CD4-positive, alpha-beta T cell (primary cell): ENCODE measurements at regions of chr1 and their contacts with region 1.

Region 1: GRCh38 chr1:36369061-36369861 is 16.5 kb downstream of the STK40 start:
- DNase-seq: peak; percentile 76 to 91 (median 84)
- ATAC-seq: peak; percentile 54
- H3K4me3 ChIP-seq: no peak overlapping the region
- H3K4me3 Mint-ChIP-seq: peak overlapping the region; percentile 14
- H3K27ac ChIP-seq: peak overlapping the region; percentile 3 to 54
- H3K27ac Mint-ChIP-seq: peak overlapping the region; percentile 88
- H3K4me1 ChIP-seq: peaks cover 79% of the 10 kb centered on the region
- H3K4me1 Mint-ChIP-seq: peaks cover 78% of the 10 kb centered on the region
- H3K27me3 ChIP-seq: no peaks in the 10 kb centered on the region
- H3K27me3 Mint-ChIP-seq: no peaks in the 10 kb centered on the region
- CTCF ChIP-seq: peak; percentile 91

Region 2: DNA sequence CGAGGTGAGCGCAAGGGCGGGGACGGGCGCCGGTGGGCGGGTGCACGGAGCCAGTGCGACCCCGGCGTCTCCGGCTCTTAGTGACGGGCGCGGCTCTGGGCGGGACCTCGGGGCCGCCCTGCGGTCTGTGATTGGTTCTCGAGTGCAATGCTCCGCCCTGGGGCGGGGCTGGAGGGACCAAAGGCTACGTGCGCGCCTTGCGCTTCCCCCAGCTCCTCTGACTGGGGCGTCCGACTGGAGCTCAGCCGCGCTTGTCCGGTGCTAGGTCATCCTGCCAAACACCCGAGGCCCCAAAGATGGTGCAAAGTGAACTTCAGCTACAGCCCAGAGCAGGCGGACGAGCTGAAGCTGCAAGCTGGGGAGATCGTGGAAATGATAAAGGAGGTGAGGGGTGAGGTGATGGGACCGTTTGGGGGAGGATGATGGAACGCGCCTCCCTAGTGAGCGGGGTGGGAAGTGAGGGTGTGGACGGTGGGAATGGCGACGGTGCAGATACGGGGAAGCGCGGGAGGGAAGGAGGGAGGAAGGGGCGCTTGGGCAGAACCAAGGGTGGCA is 62.3 kb before region 1 on chr1:
- CTCF ChIA-PET with region 1: interaction called, 6 read pairs
- POLR2A ChIA-PET with region 1: interaction called, 12 read pairs
- intact Hi-C with region 1: loop called (anchors 2 to 5 kb)
- DNase-seq: peak; percentile 85 to 96 (median 90)
- ATAC-seq: peak; percentile 98
- H3K4me3 ChIP-seq: peak overlapping the region; percentile 64
- H3K4me3 Mint-ChIP-seq: peak overlapping the region; percentile 94
- H3K27ac ChIP-seq: peak overlapping the region in 1 of 2 donors; percentile 34
- H3K27ac Mint-ChIP-seq: peak overlapping the region; percentile 78
- H3K4me1 ChIP-seq: peaks cover 24% of the 10 kb centered on the region
- H3K4me1 Mint-ChIP-seq: peaks cover 16% of the 10 kb centered on the region
- H3K27me3 ChIP-seq: no peaks in the 10 kb centered on the region
- H3K27me3 Mint-ChIP-seq: no peaks in the 10 kb centered on the region
- CTCF ChIP-seq: no peak

Region 3: DNA sequence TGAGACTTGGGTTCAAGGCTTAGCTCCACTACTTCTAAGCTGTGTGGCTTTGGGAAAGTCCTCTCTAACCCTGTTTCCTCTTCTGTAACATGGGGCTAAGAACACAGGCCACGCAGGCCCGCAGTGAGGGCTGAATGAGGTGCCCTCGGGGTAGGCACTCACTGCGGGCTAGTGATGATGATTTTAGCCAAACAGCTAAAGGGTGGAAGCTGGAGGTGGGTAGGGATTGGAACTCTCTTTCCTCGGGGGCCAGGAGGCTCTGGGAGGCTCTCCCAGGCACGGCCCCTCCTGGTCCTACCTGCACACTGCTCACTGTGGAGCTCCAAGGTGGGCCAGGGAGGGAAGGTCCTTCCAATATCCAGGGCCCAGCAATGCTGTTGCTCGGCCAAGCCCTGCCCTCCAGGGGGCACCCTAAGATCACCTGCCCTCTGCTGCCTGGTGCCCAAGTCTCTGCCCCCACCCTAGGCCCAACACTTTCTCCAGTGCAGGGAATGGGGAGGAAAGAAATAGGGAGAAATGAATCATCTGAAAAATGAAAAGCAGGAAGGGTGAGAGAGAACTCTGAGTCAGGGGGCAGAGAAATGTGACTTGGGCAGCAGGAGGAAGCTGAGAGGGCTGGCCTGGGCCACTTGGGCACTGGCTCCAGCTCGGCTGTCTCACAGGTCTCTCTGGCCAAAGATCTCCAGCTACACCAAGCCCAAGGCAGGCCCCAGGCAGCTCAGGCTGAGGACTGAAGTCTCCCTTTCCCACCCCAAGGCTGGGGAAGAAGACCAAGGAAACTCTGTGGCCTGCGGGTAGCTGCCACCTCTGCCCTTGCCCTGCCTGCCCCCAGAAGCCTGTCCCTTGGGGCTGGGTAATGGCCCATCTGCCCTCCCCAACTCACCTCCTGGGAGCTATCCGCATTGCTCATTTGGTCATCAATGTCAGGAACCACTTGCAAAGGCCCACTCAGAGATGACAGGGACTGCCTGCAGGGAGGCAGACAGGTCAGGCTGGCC is 26.5 kb before region 1 on chr1:
- CTCF ChIA-PET with region 1: interaction called, 43 read pairs
- POLR2A ChIA-PET with region 1: interaction called, 28 read pairs
- intact Hi-C with region 1: loop called (anchors 1 kb)
- DNase-seq: peak; percentile 44 to 83 (median 63)
- ATAC-seq: peak; percentile 92
- H3K4me3 ChIP-seq: no peak overlapping the region
- H3K4me3 Mint-ChIP-seq: no peak overlapping the region
- H3K27ac ChIP-seq: no peak overlapping the region
- H3K27ac Mint-ChIP-seq: peak overlapping the region; percentile 58
- H3K4me1 ChIP-seq: peaks cover 26% of the 10 kb centered on the region
- H3K4me1 Mint-ChIP-seq: peaks cover 19% of the 10 kb centered on the region
- H3K27me3 ChIP-seq: no peaks in the 10 kb centered on the region
- H3K27me3 Mint-ChIP-seq: no peaks in the 10 kb centered on the region
- CTCF ChIP-seq: peak; percentile 79

Region 4: DNA sequence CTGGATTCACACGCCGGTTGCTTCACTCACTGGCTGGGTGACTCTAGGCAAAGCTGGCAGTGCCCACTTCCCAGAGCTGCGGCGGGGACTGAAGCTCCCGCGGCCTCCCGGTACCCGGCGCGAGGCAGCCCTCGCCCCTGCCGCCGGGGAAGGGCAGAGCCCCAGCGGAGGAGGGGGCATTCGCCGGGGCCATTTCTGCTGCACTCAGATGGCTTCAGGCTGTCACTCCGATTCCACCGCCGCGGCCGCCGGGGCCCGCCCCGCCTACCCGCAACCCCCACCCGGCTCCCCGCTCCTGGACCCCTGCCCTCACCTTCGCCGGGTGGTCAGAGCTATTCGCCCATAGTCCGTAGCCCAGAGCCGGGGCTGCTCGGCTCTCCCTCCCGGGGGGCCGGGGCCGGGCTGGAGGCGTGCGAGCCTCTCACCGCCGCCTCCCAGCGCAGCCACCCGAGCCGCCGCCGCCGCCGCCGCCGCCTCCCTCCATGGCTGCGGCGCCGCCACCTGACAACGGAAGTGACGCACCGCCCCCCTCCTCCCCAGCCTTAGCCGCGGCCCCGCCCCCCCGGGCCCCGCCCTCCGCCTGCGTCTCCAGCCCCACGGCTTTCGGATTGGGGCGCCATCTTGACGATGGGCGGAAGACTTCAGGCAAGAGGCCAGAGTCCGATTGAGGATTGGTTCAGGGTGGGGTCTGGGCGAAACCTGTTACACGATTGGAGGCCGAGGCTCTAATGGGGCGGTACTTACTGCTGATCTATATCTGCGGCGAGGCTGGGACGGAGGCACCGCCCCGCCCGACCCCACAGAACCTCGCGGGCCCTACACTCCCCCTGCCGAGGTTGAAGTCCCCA is 16.4 kb after region 1 on chr1 and contains the start of gene STK40:
- CTCF ChIA-PET with region 1: interaction called, 18 read pairs
- POLR2A ChIA-PET with region 1: interaction called, 58 read pairs
- intact Hi-C with region 1: loop called (anchors 1 to 2 kb)
- DNase-seq: peak; percentile 97 to 99 (median 98)
- ATAC-seq: peak; percentile 84
- H3K4me3 ChIP-seq: peak within 1 kb of the TSS; percentile 72
- H3K4me3 Mint-ChIP-seq: peak within 1 kb of the TSS; percentile 89
- H3K27ac ChIP-seq: peak within 1 kb of the TSS; percentile 92
- H3K27ac Mint-ChIP-seq: peak within 1 kb of the TSS; percentile 98
- H3K4me1 ChIP-seq: peaks cover 56% of the 10 kb centered on the region
- H3K4me1 Mint-ChIP-seq: peaks cover 59% of the 10 kb centered on the region
- H3K27me3 ChIP-seq: no peaks in the 10 kb centered on the region
- H3K27me3 Mint-ChIP-seq: no peaks in the 10 kb centered on the region
- CTCF ChIP-seq: no peak
- total RNA-seq, gene STK40: 17.8 to 20.7 TPM

Region 5: DNA sequence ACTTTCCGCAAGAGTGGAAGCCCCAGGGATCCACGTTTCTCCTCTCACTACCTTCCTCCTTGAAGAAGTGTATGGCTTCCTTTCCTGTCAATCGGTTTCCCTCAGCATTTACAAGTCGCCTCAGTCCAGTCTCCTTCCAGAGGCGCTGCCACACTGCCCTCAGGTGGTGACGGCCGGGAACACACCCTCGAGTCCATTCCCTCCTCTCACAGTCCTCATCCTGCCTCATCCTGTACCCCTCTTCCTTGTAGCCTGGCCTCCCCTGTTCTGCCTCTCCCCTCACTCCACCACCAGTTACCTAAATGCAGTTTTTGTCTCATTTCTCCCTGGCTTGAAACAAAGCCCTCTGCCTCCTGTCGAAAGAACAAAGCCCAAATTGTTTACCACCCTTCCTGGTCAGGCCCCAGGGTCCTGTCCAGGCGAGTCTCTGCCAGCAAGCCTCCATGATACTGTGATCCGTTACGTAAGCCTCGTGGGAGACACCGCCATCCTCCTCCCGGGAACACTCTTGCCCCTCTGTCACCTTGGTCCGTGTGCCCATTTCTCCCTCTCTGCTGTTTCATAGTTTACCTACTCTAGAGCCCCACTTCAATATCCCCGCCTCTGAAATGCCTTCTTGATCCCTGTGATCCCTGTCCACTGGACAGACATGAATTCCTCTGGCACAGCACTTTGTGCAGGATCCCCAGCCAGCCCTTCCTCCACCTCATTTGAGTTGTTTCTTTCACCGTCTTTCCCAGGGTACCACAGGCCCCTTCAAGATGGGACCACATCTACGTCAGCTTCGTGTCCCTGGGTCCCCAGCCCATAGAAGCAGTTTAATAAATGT is 51.8 kb after region 1 on chr1:
- CTCF ChIA-PET with region 1: interaction called, 4 read pairs
- POLR2A ChIA-PET with region 1: interaction called, 9 read pairs
- intact Hi-C with region 1: loop called (anchors 1 kb)
- DNase-seq: peak; percentile 80 to 97 (median 92)
- ATAC-seq: peak; percentile 99
- H3K4me3 ChIP-seq: peak overlapping the region; percentile 16
- H3K4me3 Mint-ChIP-seq: peak overlapping the region; percentile 76
- H3K27ac ChIP-seq: peak overlapping the region; percentile 32 to 72
- H3K27ac Mint-ChIP-seq: peak overlapping the region; percentile 81
- H3K4me1 ChIP-seq: peaks cover 26% of the 10 kb centered on the region
- H3K4me1 Mint-ChIP-seq: peaks cover 29% of the 10 kb centered on the region
- H3K27me3 ChIP-seq: no peaks in the 10 kb centered on the region
- H3K27me3 Mint-ChIP-seq: no peaks in the 10 kb centered on the region
- CTCF ChIP-seq: peak; percentile 91